Caco-2 (cell line): ENCODE measurements at regions of chr16 and their contacts with region 1.

Region 1: GRCh38 chr16:12613131-12613991 is 190.3 kb downstream of the CPPED1 start:
- DNase-seq: peak; percentile 83 to 89
- H3K4me3 ChIP-seq: no peak overlapping the region
- H3K4me3 Mint-ChIP-seq: peak overlapping the region; percentile 69
- H3K27ac Mint-ChIP-seq: peak overlapping the region; percentile 94
- H3K4me1 ChIP-seq: peaks cover 51% of the 10 kb centered on the region
- H3K4me1 Mint-ChIP-seq: peaks cover 14% of the 10 kb centered on the region
- H3K27me3 ChIP-seq: no peaks in the 10 kb centered on the region
- H3K27me3 Mint-ChIP-seq: no peaks in the 10 kb centered on the region
- CTCF ChIP-seq: no peak

Region 2: DNA sequence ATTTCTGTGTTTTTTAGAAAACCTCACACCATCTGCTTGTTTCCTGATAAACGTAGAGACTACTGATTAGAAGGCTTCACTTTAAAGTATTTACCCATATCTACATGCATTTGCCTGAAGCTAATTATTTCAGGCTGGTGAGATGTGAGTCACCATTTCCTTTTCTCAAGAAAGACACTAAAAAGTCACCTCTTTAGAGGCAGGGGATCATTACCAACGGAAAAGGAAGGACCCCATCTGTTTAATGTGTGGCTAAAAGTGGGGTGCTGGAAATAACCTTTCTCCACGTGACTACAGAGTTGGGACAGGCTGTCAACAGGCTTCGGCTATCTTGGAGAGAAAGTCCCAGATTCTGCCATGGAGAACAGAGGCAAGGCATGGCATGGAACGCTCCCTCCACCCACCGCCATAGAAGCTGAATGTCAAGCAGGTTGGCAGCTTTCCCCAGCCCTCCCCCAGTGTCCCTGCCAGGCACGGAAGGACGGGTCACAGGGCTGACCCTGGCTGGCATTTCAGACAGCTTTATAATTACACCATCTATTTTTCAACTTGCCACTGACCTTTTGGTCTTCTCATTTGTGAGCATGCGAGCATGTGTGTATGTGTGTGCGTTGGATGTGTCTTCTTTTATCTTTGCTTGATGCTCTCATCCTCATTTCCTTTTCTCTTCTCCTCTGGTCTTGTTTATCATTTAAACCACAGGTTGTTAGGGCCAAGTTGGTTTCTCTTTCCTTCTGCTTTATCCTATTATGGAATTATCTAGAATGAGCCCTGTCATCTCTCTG is 33.3 kb after region 1 on chr16:
- CTCF ChIA-PET with region 1: no interaction called
- POLR2A ChIA-PET with region 1: no interaction called
- intact Hi-C with region 1: no loop called
- DNase-seq: no peak
- H3K4me3 ChIP-seq: no peak overlapping the region
- H3K4me3 Mint-ChIP-seq: no peak overlapping the region
- H3K27ac Mint-ChIP-seq: no peak overlapping the region
- H3K4me1 ChIP-seq: no peaks in the 10 kb centered on the region
- H3K4me1 Mint-ChIP-seq: no peaks in the 10 kb centered on the region
- H3K27me3 ChIP-seq: no peaks in the 10 kb centered on the region
- H3K27me3 Mint-ChIP-seq: no peaks in the 10 kb centered on the region
- CTCF ChIP-seq: no peak

Region 3: DNA sequence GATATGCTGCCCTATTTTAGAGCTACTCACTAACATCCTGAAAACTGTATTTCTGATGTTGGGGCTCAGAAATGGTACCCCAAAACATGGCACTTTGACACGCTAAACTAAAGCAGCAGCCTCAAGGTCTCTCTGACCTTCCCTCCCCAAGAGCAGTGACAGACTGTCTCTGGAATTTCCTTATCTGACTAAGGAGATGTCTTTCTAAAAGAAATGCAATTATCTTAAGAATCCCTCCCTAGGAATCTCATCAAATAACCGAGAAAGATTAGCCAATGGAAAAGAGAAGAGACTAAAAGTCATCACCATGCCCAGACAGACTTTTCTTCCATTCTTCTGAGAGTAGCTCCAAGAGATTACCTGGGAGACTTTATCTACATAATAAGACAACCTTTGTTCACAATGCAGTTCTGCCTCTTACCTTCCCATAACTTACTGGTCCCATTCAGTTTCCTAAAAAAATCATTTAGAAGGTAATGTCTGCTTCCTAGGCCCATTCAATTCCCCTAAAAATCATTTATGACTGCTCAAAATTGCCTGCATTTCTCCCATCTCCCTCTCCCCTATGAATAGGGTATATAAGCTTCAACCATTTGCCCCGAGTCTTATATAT is 66.4 kb after region 1 on chr16:
- CTCF ChIA-PET with region 1: no interaction called
- POLR2A ChIA-PET with region 1: no interaction called
- intact Hi-C with region 1: loop called (anchors 1 kb)
- DNase-seq: no peak
- H3K4me3 ChIP-seq: no peak overlapping the region
- H3K4me3 Mint-ChIP-seq: no peak overlapping the region
- H3K27ac Mint-ChIP-seq: no peak overlapping the region
- H3K4me1 ChIP-seq: peaks cover 34% of the 10 kb centered on the region
- H3K4me1 Mint-ChIP-seq: peaks cover 8% of the 10 kb centered on the region
- H3K27me3 ChIP-seq: no peaks in the 10 kb centered on the region; the same call in 1 of the 2 replicates
- H3K27me3 Mint-ChIP-seq: no peaks in the 10 kb centered on the region
- CTCF ChIP-seq: no peak

Region 4: DNA sequence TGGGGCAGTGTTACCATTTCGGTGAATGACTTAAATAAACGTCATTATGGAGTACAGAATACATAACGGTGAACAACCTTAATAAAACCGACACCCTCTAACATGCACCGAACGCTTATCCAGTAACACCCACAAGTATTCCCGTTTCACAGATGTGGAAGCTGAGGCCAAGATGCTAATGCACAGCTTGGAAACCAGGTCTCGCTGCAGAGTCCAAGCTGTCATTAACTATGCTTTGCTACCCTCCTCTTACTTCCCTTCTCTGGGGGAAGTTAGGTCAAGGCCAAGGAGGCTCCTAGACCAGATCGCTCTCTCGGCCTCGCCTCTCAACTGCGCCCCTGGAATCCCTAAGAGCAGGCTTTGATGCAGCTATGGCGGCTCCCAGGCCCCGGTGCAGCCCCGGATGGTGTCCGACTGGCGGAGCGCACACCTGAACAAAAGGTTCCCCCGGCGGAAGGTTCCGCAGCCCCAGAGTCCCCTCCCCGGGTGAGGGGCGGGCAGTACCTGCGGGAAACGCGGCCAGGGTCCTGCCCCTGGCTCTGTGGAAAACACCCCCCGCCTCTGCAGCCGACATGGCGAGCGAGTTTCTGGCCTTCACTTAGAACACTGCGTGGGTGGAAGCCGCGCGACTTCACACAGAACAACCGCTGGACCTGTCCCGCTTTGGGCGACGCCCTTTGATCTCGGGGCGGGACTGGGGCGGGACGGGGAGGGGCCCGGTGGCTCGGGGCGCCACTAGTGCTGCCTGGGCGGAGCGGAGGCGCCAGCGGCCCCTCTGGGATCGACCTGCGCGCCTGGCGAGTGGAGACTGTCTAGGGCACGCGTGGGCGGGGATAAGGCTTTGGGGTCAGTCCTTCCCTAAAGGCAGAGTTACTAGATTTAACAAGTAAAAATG is 190.1 kb after region 1 on chr16 and contains the start of gene CPPED1:
- CTCF ChIA-PET with region 1: no interaction called
- POLR2A ChIA-PET with region 1: no interaction called
- intact Hi-C with region 1: loop called (anchors 5 kb)
- DNase-seq: peak; percentile 93
- H3K4me3 ChIP-seq: peak within 1 kb of the TSS; percentile 80
- H3K4me3 Mint-ChIP-seq: peak within 1 kb of the TSS; percentile 91
- H3K27ac Mint-ChIP-seq: peak within 1 kb of the TSS; percentile 89
- H3K4me1 ChIP-seq: peaks cover 11% of the 10 kb centered on the region; the same call in 1 of the 2 replicates
- H3K4me1 Mint-ChIP-seq: peaks cover 11% of the 10 kb centered on the region
- H3K27me3 ChIP-seq: no peaks in the 10 kb centered on the region
- H3K27me3 Mint-ChIP-seq: no peaks in the 10 kb centered on the region
- CTCF ChIP-seq: no peak
- total RNA-seq, gene CPPED1: 27.5 and 34.9 TPM in 2 replicates